Activated naive CD4-positive, alpha-beta T cell treated with anti-CD3 and anti-CD28 coated beads for 36 hours (primary cell): ENCODE measurements at regions of chrX and their contacts with region 1.

Region 1: GRCh38 chrX:106999002-106999975 is 723 bp downstream of the MORC4 start:
- DNase-seq: peak; percentile 63
- H3K4me3 Mint-ChIP-seq: peak overlapping the region; percentile 72
- H3K27ac Mint-ChIP-seq: no peak overlapping the region
- H3K4me1 Mint-ChIP-seq: peaks cover 8% of the 10 kb centered on the region
- H3K27me3 Mint-ChIP-seq: no peaks in the 10 kb centered on the region

Region 2: GRCh38 chrX:106499473-106499872 is 499.8 kb before region 1 on chrX:
- CTCF ChIA-PET with region 1: no interaction called
- intact Hi-C with region 1: loop called (anchors 5 kb)
- DNase-seq: no peak
- H3K4me3 Mint-ChIP-seq: no peak overlapping the region
- H3K27ac Mint-ChIP-seq: no peak overlapping the region
- H3K4me1 Mint-ChIP-seq: peaks cover 6% of the 10 kb centered on the region
- H3K27me3 Mint-ChIP-seq: no peaks in the 10 kb centered on the region

Region 3: DNA sequence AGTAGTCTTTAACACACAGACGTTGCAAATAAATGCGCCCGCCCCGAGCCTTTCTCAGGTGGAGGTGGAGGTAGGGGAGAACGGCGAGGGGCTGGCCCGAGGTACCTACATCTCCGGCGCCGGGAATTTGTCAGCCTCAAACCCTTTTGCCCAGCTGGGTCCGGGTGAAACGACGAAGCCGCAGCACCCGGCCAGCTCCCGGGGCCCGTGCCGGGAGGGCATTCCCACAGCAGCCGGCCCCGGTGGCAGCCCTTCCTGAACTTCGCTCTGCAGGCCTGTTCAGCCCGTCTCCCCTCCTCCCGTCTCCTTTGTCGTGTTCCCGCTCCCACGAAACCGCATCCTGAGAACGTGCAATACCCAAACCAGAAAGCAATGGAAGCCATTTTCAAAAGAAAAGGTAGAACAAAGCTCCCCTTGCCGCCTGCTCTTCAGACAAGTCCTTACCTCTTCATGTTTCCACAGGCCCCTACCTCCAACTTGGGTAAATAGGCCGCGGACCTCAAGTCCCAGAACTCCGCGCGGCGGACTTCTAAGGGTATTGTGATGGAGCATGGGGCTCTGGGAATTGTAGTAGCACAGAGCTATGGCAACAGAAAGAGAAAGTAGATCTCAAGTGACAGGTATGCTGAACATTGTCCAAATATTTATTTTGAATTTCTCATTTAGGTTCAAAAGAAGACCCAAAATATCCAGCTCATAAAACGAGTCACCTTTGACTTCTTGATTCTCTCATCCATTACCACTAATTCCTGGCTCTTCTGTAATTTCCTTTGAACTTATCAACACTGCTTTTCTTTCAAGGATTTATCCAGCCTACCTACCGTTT is 119.2 kb after region 1 on chrX and contains the start of gene RBM41:
- CTCF ChIA-PET with region 1: no interaction called
- intact Hi-C with region 1: loop called (anchors 1 kb)
- DNase-seq: peak; percentile 82
- H3K4me3 Mint-ChIP-seq: peak within 1 kb of the TSS; percentile 99
- H3K27ac Mint-ChIP-seq: peak within 1 kb of the TSS; percentile 95
- H3K4me1 Mint-ChIP-seq: peaks cover 24% of the 10 kb centered on the region
- H3K27me3 Mint-ChIP-seq: no peaks in the 10 kb centered on the region
- total RNA-seq, gene RBM41: 10.4 to 11.1 TPM

Region 4: GRCh38 chrX:107272431-107272921 is 273.2 kb after region 1 on chrX:
- CTCF ChIA-PET with region 1: no interaction called
- intact Hi-C with region 1: loop called (anchors 2 kb)
- DNase-seq: peak; percentile 39
- H3K4me3 Mint-ChIP-seq: peak overlapping the region; percentile 32
- H3K27ac Mint-ChIP-seq: no peak overlapping the region
- H3K4me1 Mint-ChIP-seq: no peaks in the 10 kb centered on the region
- H3K27me3 Mint-ChIP-seq: peaks cover 16% of the 10 kb centered on the region

Region 5: DNA sequence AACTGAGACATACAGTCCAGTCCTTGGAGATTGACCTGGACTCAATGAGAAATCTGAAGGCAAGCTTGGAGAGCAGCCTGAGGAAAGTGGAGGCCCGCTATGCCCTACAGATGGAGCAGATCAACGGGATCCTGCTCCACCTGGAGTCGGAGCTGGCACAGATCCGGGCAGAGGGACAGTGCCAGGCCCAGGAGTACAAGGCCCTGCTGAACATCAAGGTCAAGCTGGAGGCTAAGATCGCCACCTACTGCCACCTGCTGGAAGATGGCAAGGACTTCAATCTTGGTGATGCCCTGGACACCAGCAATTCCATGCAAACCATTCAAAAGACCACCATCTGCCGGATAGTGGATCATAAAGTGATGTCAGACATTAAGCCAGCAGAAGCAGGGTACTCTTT is 429.8 kb after region 1 on chrX:
- CTCF ChIA-PET with region 1: no interaction called
- intact Hi-C with region 1: loop called (anchors 1 kb)
- DNase-seq: peak; percentile 46
- H3K4me3 Mint-ChIP-seq: no peak overlapping the region
- H3K27ac Mint-ChIP-seq: no peak overlapping the region
- H3K4me1 Mint-ChIP-seq: no peaks in the 10 kb centered on the region
- H3K27me3 Mint-ChIP-seq: no peaks in the 10 kb centered on the region

Region 6: DNA sequence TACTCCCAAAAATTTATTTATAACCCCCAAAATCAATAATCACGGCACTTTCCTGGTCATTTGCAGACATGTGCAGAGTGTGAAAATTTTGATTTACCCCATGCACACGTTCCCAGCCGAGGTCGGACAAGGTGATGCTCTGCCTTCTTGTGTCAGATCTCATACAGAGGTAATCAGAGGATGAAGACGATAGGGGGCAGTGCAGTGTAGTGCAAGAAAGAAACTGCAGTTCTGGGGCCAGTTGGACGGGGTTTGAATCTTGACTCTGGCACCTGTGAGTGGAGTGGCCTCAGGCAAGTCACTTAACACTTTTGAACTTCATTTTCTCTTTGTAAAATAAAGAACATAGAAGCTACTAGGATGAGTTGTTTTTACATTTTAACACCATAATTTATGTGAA is 538.5 kb after region 1 on chrX:
- CTCF ChIA-PET with region 1: no interaction called
- intact Hi-C with region 1: loop called (anchors 10 kb)
- DNase-seq: peak; percentile 68
- H3K4me3 Mint-ChIP-seq: no peak overlapping the region
- H3K27ac Mint-ChIP-seq: no peak overlapping the region
- H3K4me1 Mint-ChIP-seq: no peaks in the 10 kb centered on the region
- H3K27me3 Mint-ChIP-seq: peaks cover 3% of the 10 kb centered on the region